ENCODE measurements at regions of chr3 and their contacts with region 1.

Region 1: GRCh38 chr3:184261270-184261853 is at the start of gene CAMK2N2:
- DNase-seq: peak; percentile 85
- ATAC-seq: peak; percentile 83
- H3K4me3 Mint-ChIP-seq: peak within 1 kb of the TSS; percentile 92
- H3K27ac Mint-ChIP-seq: peak within 1 kb of the TSS; percentile 12; the same call in 1 of the 2 replicates
- H3K4me1 Mint-ChIP-seq: peaks cover 12% of the 10 kb centered on the region
- H3K27me3 Mint-ChIP-seq: peaks cover 75% of the 10 kb centered on the region
- CTCF ChIP-seq: no peak
- total RNA-seq, gene CAMK2N2: 10.5 to 13.1 TPM (median 11.5 TPM) in 3 replicates

Region 2: GRCh38 chr3:184250167-184250828 is 11.1 kb before region 1 on chr3:
- CTCF ChIA-PET with region 1: interaction called, 28 read pairs
- POLR2A ChIA-PET with region 1: no interaction called
- DNase-seq: peak; percentile 98
- ATAC-seq: peak; percentile 72
- H3K4me3 Mint-ChIP-seq: peak overlapping the region; percentile 98
- H3K27ac Mint-ChIP-seq: peak overlapping the region; percentile 57; the same call in 1 of the 2 replicates
- H3K4me1 Mint-ChIP-seq: 0 out of 2 replicates have a peak, but pooled peaks cover 5% of the 10 kb centered on the region
- H3K27me3 Mint-ChIP-seq: no peaks in the 10 kb centered on the region
- CTCF ChIP-seq: peak; percentile 77

Region 3: DNA sequence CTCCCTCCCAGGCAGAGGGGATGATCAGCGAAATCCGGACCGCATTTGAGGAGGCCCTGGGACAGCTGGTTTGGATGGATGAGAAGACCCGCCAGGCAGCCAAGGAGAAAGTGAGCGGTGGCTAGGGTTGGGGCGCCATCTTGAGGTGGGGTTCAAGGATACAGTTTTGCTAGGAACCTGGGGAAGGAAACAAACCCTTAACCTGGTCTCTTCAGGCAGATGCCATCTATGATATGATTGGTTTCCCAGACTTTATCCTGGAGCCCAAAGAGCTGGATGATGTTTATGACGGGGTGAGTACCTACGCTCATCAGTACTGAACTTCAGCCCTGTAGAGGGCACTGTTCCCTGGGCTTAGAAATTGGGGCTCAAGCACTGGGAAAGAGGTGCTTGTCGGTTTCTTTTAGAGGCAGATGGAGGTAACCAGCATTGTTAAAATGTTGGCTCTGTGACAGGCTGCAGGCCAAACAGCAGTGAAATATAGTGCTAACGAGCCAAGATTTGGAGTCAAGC is 28.1 kb after region 1 on chr3:
- CTCF ChIA-PET with region 1: interaction called, 10 read pairs
- POLR2A ChIA-PET with region 1: no interaction called
- DNase-seq: peak; percentile 88
- ATAC-seq: peak; percentile 76
- H3K4me3 Mint-ChIP-seq: no peak overlapping the region
- H3K27ac Mint-ChIP-seq: no peak overlapping the region
- H3K4me1 Mint-ChIP-seq: peaks cover 5% of the 10 kb centered on the region; the same call in 1 of the 2 replicates
- H3K27me3 Mint-ChIP-seq: no peaks in the 10 kb centered on the region; the same call in 1 of the 2 replicates
- CTCF ChIP-seq: peak; percentile 52